ENCODE measurements at regions of chr15 and their contacts with region 1.

Region 1: DNA sequence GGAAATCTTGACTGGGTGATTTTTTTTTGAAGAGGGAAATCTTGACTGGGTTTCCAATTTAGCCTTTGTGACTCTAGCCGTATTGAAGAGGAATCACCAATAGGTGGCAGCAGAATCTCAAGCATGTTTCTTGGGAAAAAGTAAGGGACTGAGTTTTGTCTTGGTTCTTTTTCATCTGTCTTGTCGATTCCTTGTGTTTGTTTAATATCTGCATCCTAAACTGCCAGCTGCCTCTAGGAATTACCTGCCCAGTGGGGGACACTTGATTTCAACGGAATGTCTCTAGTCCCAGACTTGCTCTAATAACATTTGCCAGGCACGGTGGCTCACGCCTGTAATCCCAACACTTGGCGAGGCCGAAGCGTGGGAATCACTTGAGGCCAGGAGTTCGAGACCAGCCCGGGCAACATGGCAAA is 89.2 kb downstream of the RBPMS2 start:
- DNase-seq: no peak
- H3K4me3 ChIP-seq: no peak overlapping the region
- H3K27ac ChIP-seq: no peak overlapping the region
- H3K4me1 ChIP-seq: peaks cover 22% of the 10 kb centered on the region
- H3K27me3 ChIP-seq: no peaks in the 10 kb centered on the region
- CTCF ChIP-seq: peak; percentile 39 to 82 (median 79)
- POLR2A ChIP-seq: no peak

Region 2: GRCh38 chr15:64656508-64656907 is 29.7 kb before region 1 on chr15:
- intact Hi-C with region 1: no loop called
- DNase-seq: no peak
- H3K4me3 ChIP-seq: no peak overlapping the region
- H3K27ac ChIP-seq: no peak overlapping the region
- H3K4me1 ChIP-seq: no peaks in the 10 kb centered on the region
- H3K27me3 ChIP-seq: no peaks in the 10 kb centered on the region
- CTCF ChIP-seq: no peak
- POLR2A ChIP-seq: no peak

Region 3: GRCh38 chr15:64731012-64731806 is 45.0 kb after region 1 on chr15:
- intact Hi-C with region 1: loop called (anchors 2 kb)
- DNase-seq: no peak
- H3K4me3 ChIP-seq: no peak overlapping the region
- H3K27ac ChIP-seq: no peak overlapping the region
- H3K4me1 ChIP-seq: no peaks in the 10 kb centered on the region
- H3K27me3 ChIP-seq: no peaks in the 10 kb centered on the region
- CTCF ChIP-seq: peak; percentile 78 to 94 (median 91)
- POLR2A ChIP-seq: no peak

Region 4: GRCh38 chr15:64809649-64810496 is 123.6 kb after region 1 on chr15:
- intact Hi-C with region 1: no loop called
- DNase-seq: no peak
- H3K4me3 ChIP-seq: no peak overlapping the region
- H3K27ac ChIP-seq: no peak overlapping the region
- H3K4me1 ChIP-seq: peaks cover 5% of the 10 kb centered on the region
- H3K27me3 ChIP-seq: no peaks in the 10 kb centered on the region
- CTCF ChIP-seq: peak; percentile 79 to 89 (median 80)
- POLR2A ChIP-seq: no peak

Region 5: GRCh38 chr15:64905941-64906340 is 219.7 kb after region 1 on chr15:
- intact Hi-C with region 1: loop called (anchors 2 kb)
- DNase-seq: no peak
- H3K4me3 ChIP-seq: no peak overlapping the region
- H3K27ac ChIP-seq: no peak overlapping the region
- H3K4me1 ChIP-seq: peaks cover under 1% of the 10 kb centered on the region
- H3K27me3 ChIP-seq: no peaks in the 10 kb centered on the region
- CTCF ChIP-seq: no peak
- POLR2A ChIP-seq: no peak

Measured in vagina (tissue), 2 donors.